Left cardiac atrium (tissue), 4 donors: ENCODE measurements at regions of chr17 and their contacts with region 1.

Region 1: GRCh38 chr17:77957857-77958715 is at the start of gene TNRC6C:
- DNase-seq: peak; percentile 100
- ATAC-seq: peak; percentile 97 to 99
- total RNA-seq, gene TNRC6C: 21.1 to 24.5 TPM

Region 2: GRCh38 chr17:77834170-77835115 is 123.6 kb before region 1 on chr17:
- intact Hi-C with region 1: loop called in 1 of 2 experiments (anchors 10 kb)
- DNase-seq: peak; percentile 84
- ATAC-seq: peak; percentile 77 to 80

Region 3: DNA sequence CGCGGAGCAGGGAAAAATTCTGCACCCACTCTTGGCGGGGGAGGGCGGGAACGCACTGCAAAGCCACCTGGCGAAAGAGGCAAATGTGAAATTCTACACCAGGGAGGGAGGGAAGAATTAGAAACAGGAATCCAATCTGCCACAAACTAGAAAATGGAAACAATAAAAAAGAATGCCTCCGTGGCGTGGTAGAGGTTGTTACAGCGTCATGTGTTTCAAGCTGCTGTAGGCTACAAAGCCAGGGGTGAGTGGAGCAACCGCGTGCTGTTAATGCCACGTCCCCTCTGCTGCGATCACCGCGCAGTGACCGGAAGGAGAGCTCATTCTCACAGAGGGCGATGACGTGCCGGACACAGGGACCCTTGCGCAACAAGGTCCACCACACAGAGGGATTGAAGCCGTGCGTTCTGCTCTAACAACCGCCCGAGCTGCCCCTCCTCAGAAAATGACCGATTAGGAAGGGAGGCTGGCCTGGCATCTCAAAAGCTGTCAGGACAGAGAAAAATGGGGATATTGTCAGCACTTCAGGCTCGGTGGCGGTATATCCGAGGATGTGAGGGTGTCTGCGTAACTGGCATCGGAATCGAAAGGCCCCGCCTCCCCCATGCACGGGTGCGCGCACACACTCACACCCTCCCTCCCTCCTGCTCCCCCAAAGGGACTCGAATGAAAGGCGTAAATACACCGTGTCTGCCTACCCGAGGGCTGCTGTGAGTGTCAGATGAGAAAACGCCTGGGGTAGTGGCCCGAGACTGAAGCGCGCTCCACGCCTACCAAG is 70.4 kb before region 1 on chr17:
- intact Hi-C with region 1: loop called in 1 of 2 experiments (anchors 2 kb)
- DNase-seq: peak; percentile 95
- ATAC-seq: peak; percentile 87 to 90

Region 4: GRCh38 chr17:78058001-78058400 is 99.9 kb after region 1 on chr17:
- intact Hi-C with region 1: no loop called
- DNase-seq: no peak
- ATAC-seq: peak in 1 of 2 donors; percentile 50